ENCODE measurements at regions of chr3 and their contacts with region 1.

Region 1: GRCh38 chr3:45026957-45027356 is 854 bp downstream of the CLEC3B start:
- DNase-seq: peak; percentile 84 to 94 (median 86)
- ATAC-seq: peak; percentile 71 to 85 (median 74)
- H3K4me3 ChIP-seq: peak overlapping the region in 11 of 12 donors; percentile 40 to 69 (median 51)
- H3K27ac ChIP-seq: peak overlapping the region; percentile 58 to 93 (median 76)
- H3K4me1 ChIP-seq: peaks cover 0 to 71% (median 48%) of the 10 kb centered on the region in 12 donors
- H3K27me3 ChIP-seq: no peaks in the 10 kb centered on the region
- CTCF ChIP-seq: no peak
- POLR2A ChIP-seq: peak in 1 of 2 donors; percentile 43

Region 2: GRCh38 chr3:44976002-44976815 is 50.7 kb before region 1 on chr3 and contains the starts of genes EXOSC7 and ZDHHC3:
- intact Hi-C with region 1: loop called in 1 of 10 experiments (anchors 10 kb)
- DNase-seq: peak; percentile 90 to 94 (median 91)
- ATAC-seq: peak; percentile 87 to 93 (median 92)
- H3K4me3 ChIP-seq: peak within 1 kb of the TSS; percentile 42 to 99 (median 84)
- H3K27ac ChIP-seq: peak within 1 kb of the TSS; percentile 56 to 94 (median 90)
- H3K4me1 ChIP-seq: peaks cover 2 to 57% (median 26%) of the 10 kb centered on the region in 12 donors
- H3K27me3 ChIP-seq: no peaks in the 10 kb centered on the region
- CTCF ChIP-seq: peak in 1 of 12 donors; percentile 7
- POLR2A ChIP-seq: peak in 1 of 2 donors; percentile 72
- total RNA-seq, gene EXOSC7: 23.8 to 87.3 (median 30.7) TPM
- total RNA-seq, gene ZDHHC3: 40.5 to 94.7 (median 52.7) TPM

Region 3: DNA sequence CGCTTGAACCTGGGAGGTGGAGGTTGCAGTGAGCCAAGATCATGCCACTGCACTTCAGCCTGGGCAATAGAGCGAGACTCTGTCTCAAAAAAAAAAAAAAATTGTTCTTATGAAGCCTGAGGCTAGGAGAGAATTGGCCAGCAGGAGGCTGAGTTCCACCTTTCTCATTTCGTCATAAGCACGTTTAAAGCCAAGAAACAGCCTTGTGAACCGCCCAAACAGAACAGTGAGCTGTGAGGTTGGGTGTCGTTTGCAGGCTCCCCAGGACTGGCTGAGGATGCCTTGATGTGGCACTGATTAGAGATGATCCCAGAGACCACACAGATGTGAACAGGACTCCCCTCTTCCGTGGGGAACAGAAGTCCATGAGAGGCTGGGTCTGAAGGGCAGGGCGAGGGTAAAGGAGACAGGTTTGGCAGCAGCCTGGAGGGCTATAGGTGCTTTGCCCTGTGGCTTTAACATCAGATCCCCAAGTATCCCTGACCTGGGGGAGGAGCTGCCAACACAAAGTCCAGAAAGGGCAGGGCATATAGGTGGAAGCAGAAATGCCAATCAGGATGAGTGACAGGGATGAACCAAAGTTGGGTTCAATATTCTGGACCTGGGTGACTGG is 52.1 kb after region 1 on chr3:
- intact Hi-C with region 1: no loop called
- DNase-seq: no peak
- ATAC-seq: peak in 1 of 4 donors; percentile 34
- H3K4me3 ChIP-seq: no peak overlapping the region
- H3K27ac ChIP-seq: no peak overlapping the region
- H3K4me1 ChIP-seq: peaks cover 0 to 15% (median 0%) of the 10 kb centered on the region in 12 donors
- H3K27me3 ChIP-seq: no peaks in the 10 kb centered on the region
- CTCF ChIP-seq: no peak
- POLR2A ChIP-seq: no peak